ENCODE measurements at regions of chr7 and their contacts with region 1.

Region 1: GRCh38 chr7:29815181-29816105 is 9.1 kb downstream of the WIPF3 start:
- DNase-seq: no peak
- H3K4me3 ChIP-seq: no peak overlapping the region
- H3K4me3 Mint-ChIP-seq: no peak overlapping the region
- H3K27ac Mint-ChIP-seq: no peak overlapping the region
- H3K4me1 ChIP-seq: no peaks in the 10 kb centered on the region
- H3K4me1 Mint-ChIP-seq: no peaks in the 10 kb centered on the region
- H3K27me3 ChIP-seq: no peaks in the 10 kb centered on the region; the same call in 1 of the 2 replicates
- H3K27me3 Mint-ChIP-seq: peaks cover 22% of the 10 kb centered on the region
- CTCF ChIP-seq: peak in 1 of 2 experiments; percentile 18

Region 2: DNA sequence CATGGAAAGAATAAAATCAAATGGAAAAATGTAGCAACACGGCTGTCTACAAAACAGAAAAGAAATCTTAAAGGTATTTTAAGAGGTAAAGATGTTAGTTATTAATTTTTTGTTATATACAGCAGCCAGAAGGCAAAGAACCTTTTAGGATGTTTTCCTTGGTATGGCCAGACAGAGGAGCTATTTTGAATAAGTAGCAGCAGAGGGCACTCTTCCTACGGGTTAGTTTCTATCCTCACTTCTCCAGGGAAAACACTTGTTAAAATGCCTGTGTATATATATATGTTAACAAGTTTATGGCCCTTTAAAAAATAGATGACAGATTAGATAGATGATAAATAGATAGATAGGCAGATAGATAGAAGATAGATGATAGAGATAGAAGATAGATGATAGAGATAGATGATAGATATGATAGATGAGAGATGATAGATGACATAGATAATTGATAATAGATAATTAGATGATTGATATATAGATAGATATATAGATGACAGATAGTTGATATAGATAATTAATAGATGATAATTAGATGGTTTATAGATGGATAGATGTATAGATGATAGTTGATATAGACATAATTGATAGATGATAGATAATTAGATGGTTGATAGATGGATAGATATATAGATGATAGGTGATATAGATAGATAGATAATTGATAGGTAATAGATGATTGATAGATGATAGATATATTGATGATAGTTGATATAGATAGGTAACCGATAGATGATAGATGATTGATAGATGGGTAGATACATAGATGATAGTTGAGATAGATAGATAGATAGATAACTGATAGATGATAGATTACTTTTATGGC is 66.9 kb before region 1 on chr7:
- CTCF ChIA-PET with region 1: no interaction called
- POLR2A ChIA-PET with region 1: no interaction called
- intact Hi-C with region 1: loop called (anchors 2 kb)
- DNase-seq: peak in 1 of 2 experiments; percentile 29
- H3K4me3 ChIP-seq: no peak overlapping the region
- H3K4me3 Mint-ChIP-seq: no peak overlapping the region
- H3K27ac Mint-ChIP-seq: no peak overlapping the region
- H3K4me1 ChIP-seq: no peaks in the 10 kb centered on the region
- H3K4me1 Mint-ChIP-seq: peaks cover 7% of the 10 kb centered on the region
- H3K27me3 ChIP-seq: no peaks in the 10 kb centered on the region; the same call in 1 of the 2 replicates
- H3K27me3 Mint-ChIP-seq: peaks cover 20% of the 10 kb centered on the region
- CTCF ChIP-seq: peak; percentile 62 to 64

Region 3: GRCh38 chr7:29764227-29764626 is 51.2 kb before region 1 on chr7:
- CTCF ChIA-PET with region 1: no interaction called
- POLR2A ChIA-PET with region 1: no interaction called
- intact Hi-C with region 1: loop called (anchors 2 kb)
- DNase-seq: peak; percentile 47 to 49
- H3K4me3 ChIP-seq: no peak overlapping the region
- H3K4me3 Mint-ChIP-seq: no peak overlapping the region
- H3K27ac Mint-ChIP-seq: no peak overlapping the region
- H3K4me1 ChIP-seq: no peaks in the 10 kb centered on the region
- H3K4me1 Mint-ChIP-seq: peaks cover 13% of the 10 kb centered on the region
- H3K27me3 ChIP-seq: no peaks in the 10 kb centered on the region
- H3K27me3 Mint-ChIP-seq: peaks cover 4% of the 10 kb centered on the region
- CTCF ChIP-seq: peak in 1 of 2 experiments; percentile 49

Region 4: DNA sequence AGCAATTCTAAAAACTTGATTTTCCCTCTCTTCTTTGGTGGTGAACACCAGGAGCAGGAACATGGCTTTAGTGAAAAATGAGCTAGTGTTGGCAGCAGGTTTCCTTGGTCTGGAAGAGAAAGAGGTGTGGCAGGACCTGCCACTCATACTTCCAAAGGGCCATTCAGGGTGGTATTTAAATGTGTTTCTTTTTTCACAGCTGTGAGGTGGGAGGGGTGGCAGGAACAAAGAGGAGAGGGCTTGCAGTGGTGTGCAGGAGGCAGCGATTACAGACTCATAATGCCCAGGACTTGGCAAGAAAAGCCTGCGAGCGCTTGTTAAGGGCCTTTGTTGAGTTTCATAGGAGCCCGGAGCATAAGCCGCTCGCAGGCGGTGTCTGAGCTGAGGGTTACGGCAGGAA is 27.6 kb after region 1 on chr7:
- CTCF ChIA-PET with region 1: no interaction called
- POLR2A ChIA-PET with region 1: no interaction called
- intact Hi-C with region 1: no loop called
- DNase-seq: no peak
- H3K4me3 ChIP-seq: no peak overlapping the region
- H3K4me3 Mint-ChIP-seq: no peak overlapping the region
- H3K27ac Mint-ChIP-seq: no peak overlapping the region
- H3K4me1 ChIP-seq: peaks cover 16% of the 10 kb centered on the region
- H3K4me1 Mint-ChIP-seq: peaks cover 12% of the 10 kb centered on the region
- H3K27me3 ChIP-seq: no peaks in the 10 kb centered on the region
- H3K27me3 Mint-ChIP-seq: no peaks in the 10 kb centered on the region
- CTCF ChIP-seq: no peak

Region 5: DNA sequence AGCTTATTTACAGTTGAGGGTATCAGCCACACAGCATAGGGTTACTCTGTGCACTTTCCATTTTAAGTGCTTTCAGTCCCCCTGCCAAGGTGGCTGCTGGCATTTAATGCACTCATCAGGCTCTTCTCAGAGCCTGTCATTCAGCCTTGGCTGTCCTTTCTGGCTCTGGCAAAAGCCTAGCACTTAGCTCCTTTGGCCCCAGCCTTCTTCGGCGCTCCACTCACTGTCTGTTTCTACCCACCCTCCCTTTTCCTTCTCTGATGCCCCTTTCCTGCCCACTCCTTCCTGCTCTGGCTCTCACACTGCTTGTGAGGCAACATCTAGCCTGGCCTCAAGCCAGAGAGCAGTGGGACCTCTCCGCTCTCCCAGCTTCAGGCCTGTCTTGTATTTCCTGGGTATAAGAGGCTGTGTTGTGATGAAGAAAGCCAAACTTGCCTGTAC is 51.1 kb after region 1 on chr7:
- CTCF ChIA-PET with region 1: no interaction called
- POLR2A ChIA-PET with region 1: no interaction called
- intact Hi-C with region 1: no loop called
- DNase-seq: no peak
- H3K4me3 ChIP-seq: no peak overlapping the region
- H3K4me3 Mint-ChIP-seq: no peak overlapping the region
- H3K27ac Mint-ChIP-seq: no peak overlapping the region
- H3K4me1 ChIP-seq: no peaks in the 10 kb centered on the region
- H3K4me1 Mint-ChIP-seq: no peaks in the 10 kb centered on the region
- H3K27me3 ChIP-seq: no peaks in the 10 kb centered on the region
- H3K27me3 Mint-ChIP-seq: peaks cover 9% of the 10 kb centered on the region
- CTCF ChIP-seq: no peak

Region 6: DNA sequence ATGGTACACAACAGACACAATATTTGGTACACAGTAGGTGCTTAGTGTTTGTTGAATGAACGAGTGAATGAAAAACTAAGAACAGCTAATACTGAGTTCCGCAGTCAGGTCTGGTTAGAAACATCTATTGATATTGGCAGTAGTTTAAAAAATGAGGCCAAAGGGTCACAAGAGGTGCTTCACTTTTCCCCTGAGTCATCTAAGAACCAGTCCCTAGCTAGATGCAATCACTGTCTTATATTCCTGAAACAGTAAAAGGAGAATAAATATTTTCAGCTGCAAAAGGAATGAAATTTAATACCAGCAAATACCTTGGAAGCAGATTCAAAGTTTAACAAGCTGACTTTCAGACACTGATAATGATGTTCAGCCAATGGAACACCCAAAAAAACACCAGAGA is 119.7 kb after region 1 on chr7:
- CTCF ChIA-PET with region 1: no interaction called
- POLR2A ChIA-PET with region 1: no interaction called
- intact Hi-C with region 1: no loop called
- DNase-seq: no peak
- H3K4me3 ChIP-seq: no peak overlapping the region
- H3K4me3 Mint-ChIP-seq: no peak overlapping the region
- H3K27ac Mint-ChIP-seq: no peak overlapping the region
- H3K4me1 ChIP-seq: no peaks in the 10 kb centered on the region
- H3K4me1 Mint-ChIP-seq: no peaks in the 10 kb centered on the region
- H3K27me3 ChIP-seq: no peaks in the 10 kb centered on the region
- H3K27me3 Mint-ChIP-seq: no peaks in the 10 kb centered on the region
- CTCF ChIP-seq: no peak